Panc1 (cell line): ENCODE measurements at regions of chr19 and their contacts with region 1.

Region 1: GRCh38 chr19:57004418-57004817 is 115.4 kb upstream of the USP29 start:
- DNase-seq: no peak
- ATAC-seq: no peak
- H3K4me3 ChIP-seq: no peak overlapping the region
- H3K27ac ChIP-seq: no peak overlapping the region
- H3K4me1 ChIP-seq: no peaks in the 10 kb centered on the region
- H3K27me3 ChIP-seq: no peaks in the 10 kb centered on the region
- CTCF ChIP-seq: no peak

Region 2: GRCh38 chr19:56642711-56643459 is 361.5 kb before region 1 on chr19 and contains the start of gene SMIM17:
- CTCF ChIA-PET with region 1: no interaction called
- POLR2A ChIA-PET with region 1: no interaction called
- in situ Hi-C with region 1: no loop called
- intact Hi-C with region 1: no loop called
- DNase-seq: no peak
- ATAC-seq: no peak
- H3K4me3 ChIP-seq: no peak within 1 kb of the TSS
- H3K27ac ChIP-seq: no peak within 1 kb of the TSS
- H3K4me1 ChIP-seq: no peaks in the 10 kb centered on the region
- H3K27me3 ChIP-seq: no peaks in the 10 kb centered on the region
- CTCF ChIP-seq: no peak
- total RNA-seq, gene SMIM17: 0.28 TPM

Region 3: DNA sequence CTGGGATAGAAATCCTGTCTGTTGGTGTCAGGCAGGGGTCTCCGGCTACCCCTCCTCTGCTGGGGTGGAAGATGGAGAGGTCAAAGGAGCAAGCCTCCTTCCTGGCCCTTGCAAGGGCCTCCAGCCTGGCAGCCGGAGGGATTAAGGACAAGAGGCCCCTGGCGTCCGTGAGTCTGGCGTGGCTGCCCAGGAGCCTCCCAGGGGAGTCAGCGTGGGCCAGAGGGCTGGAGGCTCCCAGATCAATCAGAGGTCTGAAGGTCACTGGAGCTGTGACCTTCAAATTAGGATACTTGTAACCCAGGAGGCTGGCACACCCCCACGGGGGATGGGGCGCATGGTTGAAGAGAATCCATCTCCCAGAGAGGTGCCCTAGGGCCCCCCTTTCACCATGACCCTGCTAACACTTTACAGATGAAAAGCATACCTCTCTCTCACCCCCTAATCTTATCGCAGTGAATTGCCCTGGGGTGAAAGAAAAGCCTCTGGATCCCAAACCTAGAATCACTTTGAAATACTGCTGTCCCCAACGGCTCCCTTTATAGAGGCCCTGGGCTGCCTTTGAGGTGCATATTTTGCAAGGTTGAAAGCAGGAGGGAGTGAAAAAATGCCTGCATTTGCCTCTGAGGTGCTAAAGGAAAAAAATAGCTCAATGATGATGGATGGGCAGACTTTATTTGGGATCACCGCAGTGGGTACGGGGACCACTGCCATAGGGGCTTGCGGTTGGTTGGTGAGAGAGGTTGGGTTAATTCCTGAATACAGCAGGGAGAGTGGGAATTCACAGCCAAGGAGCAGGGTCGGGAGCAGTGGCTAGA is 119.0 kb before region 1 on chr19:
- CTCF ChIA-PET with region 1: no interaction called
- POLR2A ChIA-PET with region 1: interaction called, 11 read pairs
- in situ Hi-C with region 1: no loop called
- intact Hi-C with region 1: no loop called
- DNase-seq: no peak
- ATAC-seq: no peak
- H3K4me3 ChIP-seq: no peak overlapping the region
- H3K27ac ChIP-seq: no peak overlapping the region
- H3K4me1 ChIP-seq: no peaks in the 10 kb centered on the region
- H3K27me3 ChIP-seq: no peaks in the 10 kb centered on the region
- CTCF ChIP-seq: no peak

Region 4: DNA sequence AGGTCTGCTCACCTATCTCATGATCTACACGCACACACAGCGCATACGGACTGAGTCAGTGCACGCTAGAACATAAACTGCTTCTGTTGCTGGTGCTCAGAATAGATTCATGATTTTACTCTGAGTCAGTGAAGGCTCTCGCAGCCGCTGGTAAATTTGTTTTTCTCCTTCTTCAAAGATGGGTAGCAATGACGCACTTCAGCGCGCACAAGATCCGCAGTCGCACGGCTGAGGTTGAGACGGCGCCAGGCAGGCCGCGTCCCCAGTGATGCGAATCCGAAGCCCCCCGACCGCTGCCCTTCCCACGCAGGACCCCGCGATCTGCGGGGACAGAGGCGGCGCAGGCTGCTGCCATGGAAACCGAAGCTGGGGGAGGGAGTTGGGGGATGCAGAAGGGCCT is 11.7 kb after region 1 on chr19:
- CTCF ChIA-PET with region 1: no interaction called
- POLR2A ChIA-PET with region 1: no interaction called
- in situ Hi-C with region 1: no loop called
- intact Hi-C with region 1: no loop called
- DNase-seq: no peak
- ATAC-seq: no peak
- H3K4me3 ChIP-seq: no peak overlapping the region
- H3K27ac ChIP-seq: no peak overlapping the region
- H3K4me1 ChIP-seq: no peaks in the 10 kb centered on the region
- H3K27me3 ChIP-seq: no peaks in the 10 kb centered on the region
- CTCF ChIP-seq: no peak

Region 5: DNA sequence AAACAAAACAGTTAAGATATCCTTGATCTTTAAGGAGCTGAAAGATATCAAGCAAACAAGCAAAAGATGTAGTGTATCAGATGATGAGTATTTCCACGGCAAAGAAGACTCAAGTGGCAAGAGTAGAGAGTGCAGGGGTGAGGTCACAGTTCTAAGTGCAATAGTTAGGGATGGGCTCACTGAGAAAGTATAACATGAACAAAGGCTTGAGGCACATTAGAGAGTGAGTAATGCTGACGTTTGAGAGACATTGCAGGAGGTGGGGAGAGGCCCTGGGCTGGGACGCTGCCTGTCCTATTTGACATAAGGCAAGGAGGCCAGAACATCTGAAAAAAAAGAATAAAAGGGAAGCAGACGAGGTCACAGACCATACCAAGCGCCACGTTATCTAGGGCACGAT is 161.4 kb after region 1 on chr19:
- CTCF ChIA-PET with region 1: no interaction called
- POLR2A ChIA-PET with region 1: no interaction called
- in situ Hi-C with region 1: no loop called
- intact Hi-C with region 1: no loop called
- DNase-seq: no peak
- ATAC-seq: no peak
- H3K4me3 ChIP-seq: no peak overlapping the region
- H3K27ac ChIP-seq: no peak overlapping the region
- H3K4me1 ChIP-seq: no peaks in the 10 kb centered on the region
- H3K27me3 ChIP-seq: no peaks in the 10 kb centered on the region
- CTCF ChIP-seq: no peak

Region 6: GRCh38 chr19:57249329-57249728 is 244.9 kb after region 1 on chr19:
- CTCF ChIA-PET with region 1: no interaction called
- POLR2A ChIA-PET with region 1: no interaction called
- in situ Hi-C with region 1: no loop called
- intact Hi-C with region 1: no loop called
- DNase-seq: no peak
- ATAC-seq: no peak
- H3K4me3 ChIP-seq: no peak overlapping the region
- H3K27ac ChIP-seq: no peak overlapping the region
- H3K4me1 ChIP-seq: no peaks in the 10 kb centered on the region
- H3K27me3 ChIP-seq: no peaks in the 10 kb centered on the region
- CTCF ChIP-seq: no peak